Mammary epithelial cell (primary cell): ENCODE measurements at regions of chr5 and their contacts with region 1.

Region 1: DNA sequence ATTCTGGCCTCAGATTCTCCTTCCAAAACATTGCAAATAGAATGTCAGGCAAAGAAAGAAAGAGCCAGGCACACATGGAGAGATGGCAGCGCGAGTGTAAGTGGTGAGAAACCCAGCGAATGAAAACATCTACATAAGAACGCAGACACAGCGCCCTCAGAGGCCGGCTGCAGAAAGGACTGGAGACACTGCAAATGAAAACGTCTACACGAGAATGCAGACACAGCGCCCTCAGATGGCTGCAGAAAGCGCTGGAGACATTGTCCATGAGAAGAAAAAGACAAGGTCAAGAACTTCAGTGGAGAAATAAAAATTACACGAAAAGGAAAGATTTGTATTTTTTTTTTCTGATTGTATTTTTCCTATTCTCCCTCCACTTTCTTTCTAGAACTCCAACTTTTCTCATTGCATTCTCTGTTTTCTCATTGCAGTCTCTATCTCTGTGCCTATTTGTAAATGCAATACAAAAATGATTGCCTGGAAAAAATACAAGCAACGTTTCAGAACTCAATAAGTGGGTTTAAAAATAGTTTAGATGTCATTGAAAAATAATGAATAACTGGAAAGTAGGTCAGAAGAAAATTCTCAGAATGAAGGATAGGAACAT is 117.9 kb upstream of the LPCAT1 start:
- DNase-seq: peak; percentile 75
- H3K4me3 ChIP-seq: no peak overlapping the region
- H3K27ac ChIP-seq: no peak overlapping the region
- H3K4me1 ChIP-seq: peaks cover 6% of the 10 kb centered on the region
- H3K27me3 ChIP-seq: peaks cover 15% of the 10 kb centered on the region
- CTCF ChIP-seq: peak; percentile 97 to 98

Region 2: GRCh38 chr5:923281-923873 is 718.3 kb before region 1 on chr5:
- CTCF ChIA-PET with region 1: no interaction called
- dilution Hi-C with region 1: loop called (anchors 25 kb)
- in situ Hi-C with region 1: loop called in 1 of 2 experiments (anchors 25 kb)
- intact Hi-C with region 1: loop called (anchors 5 kb)
- DNase-seq: peak; percentile 43
- H3K4me3 ChIP-seq: no peak overlapping the region
- H3K27ac ChIP-seq: no peak overlapping the region
- H3K4me1 ChIP-seq: no peaks in the 10 kb centered on the region
- H3K27me3 ChIP-seq: peaks cover 6% of the 10 kb centered on the region
- CTCF ChIP-seq: peak; percentile 75 to 93

Region 3: GRCh38 chr5:1004461-1005248 is 637.0 kb before region 1 on chr5:
- CTCF ChIA-PET with region 1: no interaction called
- dilution Hi-C with region 1: no loop called
- in situ Hi-C with region 1: no loop called
- intact Hi-C with region 1: loop called (anchors 10 kb)
- DNase-seq: no peak
- H3K4me3 ChIP-seq: peak overlapping the region; percentile 2 to 38 (median 25)
- H3K27ac ChIP-seq: no peak overlapping the region
- H3K4me1 ChIP-seq: peaks cover 30% of the 10 kb centered on the region
- H3K27me3 ChIP-seq: peaks cover 26% of the 10 kb centered on the region
- CTCF ChIP-seq: peak in 1 of 2 donors; percentile 45

Region 4: GRCh38 chr5:1174122-1174936 is 467.3 kb before region 1 on chr5:
- CTCF ChIA-PET with region 1: interaction called, 4 read pairs
- dilution Hi-C with region 1: no loop called
- in situ Hi-C with region 1: loop called (anchors 10 to 25 kb)
- intact Hi-C with region 1: no loop called
- DNase-seq: peak; percentile 57
- H3K4me3 ChIP-seq: no peak overlapping the region
- H3K27ac ChIP-seq: no peak overlapping the region
- H3K4me1 ChIP-seq: no peaks in the 10 kb centered on the region
- H3K27me3 ChIP-seq: no peaks in the 10 kb centered on the region
- CTCF ChIP-seq: peak; percentile 79 to 88

Region 5: GRCh38 chr5:1380011-1380817 is 261.4 kb before region 1 on chr5:
- CTCF ChIA-PET with region 1: no interaction called
- dilution Hi-C with region 1: no loop called
- in situ Hi-C with region 1: loop called in 1 of 2 experiments (anchors 25 kb)
- intact Hi-C with region 1: loop called (anchors 2 kb)
- DNase-seq: peak; percentile 3
- H3K4me3 ChIP-seq: no peak overlapping the region
- H3K27ac ChIP-seq: no peak overlapping the region
- H3K4me1 ChIP-seq: no peaks in the 10 kb centered on the region
- H3K27me3 ChIP-seq: no peaks in the 10 kb centered on the region
- CTCF ChIP-seq: peak; percentile 28 to 57

Region 6: DNA sequence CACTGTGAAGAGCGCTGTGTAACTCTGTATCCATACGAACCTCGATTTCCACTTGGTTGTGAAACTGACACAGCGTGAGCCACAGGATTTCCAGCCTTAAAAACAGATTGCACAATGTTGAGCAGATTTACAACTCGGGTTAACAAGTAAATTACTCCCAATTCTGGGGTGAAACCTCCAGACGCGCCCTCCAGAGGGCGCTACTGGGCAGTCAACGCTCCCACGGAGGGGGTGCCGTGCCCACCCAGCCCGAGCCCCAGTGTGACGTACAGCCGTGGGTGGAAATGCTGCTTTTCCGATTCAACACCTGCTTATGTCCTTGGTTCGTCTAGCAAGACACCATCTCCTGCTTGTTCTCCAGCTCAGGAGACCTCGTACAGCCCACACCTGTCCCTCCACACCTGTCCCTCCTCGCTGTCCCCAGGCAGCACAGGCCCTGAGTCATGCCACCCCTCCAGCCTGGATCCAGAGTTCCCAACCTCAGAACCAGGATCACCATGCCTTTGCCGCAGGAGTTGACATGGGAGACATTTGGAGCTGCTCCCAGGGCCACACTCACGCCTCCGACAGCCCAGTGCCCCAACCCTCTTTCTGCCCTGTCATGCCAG is 162.0 kb before region 1 on chr5:
- CTCF ChIA-PET with region 1: no interaction called
- dilution Hi-C with region 1: no loop called
- in situ Hi-C with region 1: no loop called
- intact Hi-C with region 1: loop called (anchors 10 kb)
- DNase-seq: no peak
- H3K4me3 ChIP-seq: no peak overlapping the region
- H3K27ac ChIP-seq: no peak overlapping the region
- H3K4me1 ChIP-seq: no peaks in the 10 kb centered on the region
- H3K27me3 ChIP-seq: no peaks in the 10 kb centered on the region
- CTCF ChIP-seq: peak; percentile 18 to 52